Gastrocnemius medialis (tissue), 4 donors: ENCODE measurements at regions of chr12 and their contacts with region 1.

Region 1: GRCh38 chr12:77724367-77724957 is 106.2 kb upstream of the NAV3 start:
- DNase-seq: no peak
- ATAC-seq: no peak
- H3K4me3 ChIP-seq: no peak overlapping the region
- H3K27ac ChIP-seq: no peak overlapping the region
- H3K4me1 ChIP-seq: no peaks in the 10 kb centered on the region
- H3K27me3 ChIP-seq: no peaks in the 10 kb centered on the region
- CTCF ChIP-seq: peak in 2 of 5 experiments; percentile 27
- POLR2A ChIP-seq: no peak

Region 2: GRCh38 chr12:77914081-77914488 is 189.6 kb after region 1 on chr12:
- in situ Hi-C with region 1: loop called in 1 of 4 experiments (anchors 10 kb)
- intact Hi-C with region 1: no loop called
- DNase-seq: no peak
- ATAC-seq: no peak
- H3K4me3 ChIP-seq: no peak overlapping the region
- H3K27ac ChIP-seq: no peak overlapping the region
- H3K4me1 ChIP-seq: no peaks in the 10 kb centered on the region
- H3K27me3 ChIP-seq: no peaks in the 10 kb centered on the region
- CTCF ChIP-seq: no peak
- POLR2A ChIP-seq: no peak

Region 3: GRCh38 chr12:77925536-77926108 is 201.2 kb after region 1 on chr12:
- in situ Hi-C with region 1: loop called in 1 of 4 experiments (anchors 10 kb)
- intact Hi-C with region 1: loop called (anchors 2 kb)
- DNase-seq: peak; percentile 9 to 35
- ATAC-seq: peak; percentile 54 to 62
- H3K4me3 ChIP-seq: no peak overlapping the region
- H3K27ac ChIP-seq: no peak overlapping the region
- H3K4me1 ChIP-seq: no peaks in the 10 kb centered on the region
- H3K27me3 ChIP-seq: no peaks in the 10 kb centered on the region
- CTCF ChIP-seq: peak; percentile 35 to 56 (median 54)
- POLR2A ChIP-seq: no peak